ENCODE measurements at regions of chr9 and their contacts with region 1.

Region 1: GRCh38 chr9:109411798-109412352 is 86.2 kb downstream of the PTPN3 start:
- DNase-seq: peak; percentile 25 to 35
- ATAC-seq: peak in 1 of 2 experiments; percentile 75; a peak in 3 of 6 replicates
- H3K4me3 ChIP-seq: no peak overlapping the region
- H3K27ac ChIP-seq: no peak overlapping the region
- H3K4me1 ChIP-seq: no peaks in the 10 kb centered on the region
- CTCF ChIP-seq: peak; percentile 46
- EP300 ChIP-seq: no peak
- POLR2A ChIP-seq: no peak
- RAD21 ChIP-seq: peak; percentile 38 to 46

Region 2: GRCh38 chr9:109379513-109379912 is 32.4 kb before region 1 on chr9:
- CTCF ChIA-PET with region 1: no interaction called
- POLR2A ChIA-PET with region 1: no interaction called
- DNase-seq: no peak
- ATAC-seq: no peak
- H3K4me3 ChIP-seq: no peak overlapping the region
- H3K27ac ChIP-seq: no peak overlapping the region
- H3K4me1 ChIP-seq: no peaks in the 10 kb centered on the region
- CTCF ChIP-seq: no peak
- EP300 ChIP-seq: no peak
- POLR2A ChIP-seq: no peak
- RAD21 ChIP-seq: no peak

Region 3: GRCh38 chr9:109401168-109401989 is 10.5 kb before region 1 on chr9:
- CTCF ChIA-PET with region 1: interaction called, 31 read pairs
- POLR2A ChIA-PET with region 1: no interaction called
- DNase-seq: peak; percentile 67 to 74
- ATAC-seq: peak; percentile 98
- H3K4me3 ChIP-seq: no peak overlapping the region
- H3K27ac ChIP-seq: no peak overlapping the region
- H3K4me1 ChIP-seq: no peaks in the 10 kb centered on the region
- CTCF ChIP-seq: peak; percentile 91
- EP300 ChIP-seq: no peak
- POLR2A ChIP-seq: no peak
- RAD21 ChIP-seq: peak; percentile 78 to 80

Region 4: DNA sequence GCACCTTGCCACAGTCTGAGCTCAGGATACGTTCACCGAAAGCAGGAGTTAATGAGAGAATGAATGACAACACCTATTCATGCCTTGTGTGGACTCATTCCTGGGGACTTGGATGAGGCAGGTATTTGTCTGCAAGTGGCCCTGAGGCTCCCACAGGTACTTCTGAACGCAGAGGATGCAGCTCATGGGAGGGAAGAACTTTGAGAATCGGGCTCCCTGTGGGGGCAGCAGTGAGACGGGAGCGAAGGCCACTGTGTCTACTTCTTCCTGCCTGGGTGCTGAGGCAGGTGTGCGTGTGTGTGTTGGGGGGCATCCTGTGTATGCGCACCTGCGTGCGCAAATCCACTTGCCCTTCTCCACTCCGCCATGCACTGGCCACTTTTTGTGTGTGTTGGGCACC is 44.0 kb after region 1 on chr9:
- CTCF ChIA-PET with region 1: no interaction called
- POLR2A ChIA-PET with region 1: no interaction called
- DNase-seq: no peak
- ATAC-seq: no peak
- H3K4me3 ChIP-seq: no peak overlapping the region
- H3K27ac ChIP-seq: peak overlapping the region in 1 of 2 experiments; percentile 47; a peak in 1 of 6 replicates
- H3K4me1 ChIP-seq: peaks cover 48% of the 10 kb centered on the region
- CTCF ChIP-seq: no peak
- EP300 ChIP-seq: no peak
- POLR2A ChIP-seq: no peak
- RAD21 ChIP-seq: no peak

Region 5: DNA sequence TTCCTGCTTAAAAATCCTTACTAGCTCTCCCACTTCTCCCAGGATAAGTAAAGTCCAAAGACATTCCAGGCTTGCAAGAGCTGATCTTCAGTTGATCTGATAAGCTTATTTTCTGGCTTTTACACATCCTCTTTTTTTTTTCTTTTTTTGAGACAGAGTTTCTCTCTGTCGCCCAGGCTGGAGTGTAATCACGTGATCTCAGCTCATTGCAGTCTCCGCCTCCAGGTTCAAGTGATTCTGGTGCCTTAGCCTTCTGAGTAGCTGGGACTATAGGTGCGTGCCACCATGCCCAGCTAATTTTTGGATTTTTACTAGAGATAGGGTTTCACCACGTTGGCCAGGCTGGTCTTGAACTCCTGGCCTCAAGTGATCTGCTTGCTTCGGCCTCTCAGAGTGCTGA is 123.5 kb after region 1 on chr9:
- CTCF ChIA-PET with region 1: no interaction called
- POLR2A ChIA-PET with region 1: no interaction called
- DNase-seq: no peak
- ATAC-seq: no peak
- H3K4me3 ChIP-seq: no peak overlapping the region
- H3K27ac ChIP-seq: no peak overlapping the region
- H3K4me1 ChIP-seq: no peaks in the 10 kb centered on the region
- CTCF ChIP-seq: no peak
- EP300 ChIP-seq: no peak
- POLR2A ChIP-seq: no peak
- RAD21 ChIP-seq: no peak

Measured in A549 (cell line).